OCI-LY7 (cell line): ENCODE measurements at regions of chr3 and their contacts with region 1.

Region 1: DNA sequence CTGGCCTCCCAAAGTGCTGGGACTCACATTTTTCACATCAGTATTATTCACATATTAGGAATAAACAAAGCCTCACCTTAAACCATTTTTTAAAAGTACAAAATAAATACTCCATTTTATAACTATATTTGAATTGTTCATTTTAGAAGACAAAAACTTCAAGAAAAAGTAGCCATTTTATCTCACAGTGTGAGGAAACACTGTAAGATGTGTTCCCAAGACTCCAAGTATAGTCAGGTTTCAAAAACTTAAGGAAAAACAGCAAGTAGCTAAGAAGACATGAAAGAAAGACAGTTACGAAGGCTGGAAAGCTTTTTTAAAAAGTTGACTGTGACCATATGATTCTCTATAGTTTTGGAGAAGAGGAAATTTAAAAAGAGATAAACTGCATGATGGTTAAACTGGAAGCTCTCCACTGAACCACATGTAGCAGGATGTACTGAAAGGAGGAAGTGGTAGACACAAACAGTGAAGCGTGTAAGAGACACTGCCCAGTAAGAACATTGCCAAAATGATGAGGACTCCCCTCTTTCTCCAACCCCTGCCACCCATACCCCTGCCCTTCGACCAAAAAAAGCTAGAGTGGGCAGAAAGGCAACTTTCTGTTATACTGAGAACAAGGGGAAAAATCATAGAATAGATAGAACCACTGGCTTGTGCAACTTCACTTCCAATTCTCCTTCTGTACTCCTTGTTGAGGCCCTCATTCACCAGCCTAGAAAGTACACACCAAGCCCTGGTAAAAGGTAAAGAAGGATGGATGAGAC is 6.2 kb upstream of the TMF1 start:
- DNase-seq: peak; percentile 65
- H3K4me3 ChIP-seq: no peak overlapping the region
- H3K27ac ChIP-seq: peak overlapping the region; percentile 52
- H3K4me1 ChIP-seq: peaks cover 13% of the 10 kb centered on the region
- CTCF ChIP-seq: no peak

Region 2: GRCh38 chr3:69079269-69080159 is 21.2 kb after region 1 on chr3:
- CTCF ChIA-PET with region 1: no interaction called
- POLR2A ChIA-PET with region 1: interaction called, 49 read pairs
- intact Hi-C with region 1: loop called (anchors 2 kb)
- DNase-seq: peak; percentile 28
- H3K4me3 ChIP-seq: peak overlapping the region; percentile 99
- H3K27ac ChIP-seq: peak overlapping the region; percentile 64
- H3K4me1 ChIP-seq: peaks cover 63% of the 10 kb centered on the region
- CTCF ChIP-seq: no peak